Activated CD4-positive, alpha-beta T cell treated with anti-CD3 and anti-CD28 coated beads for 36 hours (primary cell): ENCODE measurements at regions of chr2 and their contacts with region 1.

Region 1: GRCh38 chr2:169664978-169665930 is 29.0 kb downstream of the CFAP210 start:
- DNase-seq: no peak
- ATAC-seq: no peak
- H3K4me3 Mint-ChIP-seq: no peak overlapping the region
- H3K27ac Mint-ChIP-seq: no peak overlapping the region
- H3K4me1 Mint-ChIP-seq: no peaks in the 10 kb centered on the region
- H3K27me3 Mint-ChIP-seq: no peaks in the 10 kb centered on the region

Region 2: GRCh38 chr2:169649278-169649677 is 16.0 kb before region 1 on chr2:
- CTCF ChIA-PET with region 1: no interaction called
- POLR2A ChIA-PET with region 1: no interaction called
- intact Hi-C with region 1: loop called in 1 of 2 experiments (anchors 1 kb)
- DNase-seq: no peak
- ATAC-seq: no peak
- H3K4me3 Mint-ChIP-seq: no peak overlapping the region
- H3K27ac Mint-ChIP-seq: no peak overlapping the region
- H3K4me1 Mint-ChIP-seq: no peaks in the 10 kb centered on the region
- H3K27me3 Mint-ChIP-seq: peaks cover 15% of the 10 kb centered on the region

Region 3: GRCh38 chr2:169716238-169716886 is 51.1 kb after region 1 on chr2:
- CTCF ChIA-PET with region 1: no interaction called
- POLR2A ChIA-PET with region 1: no interaction called
- intact Hi-C with region 1: no loop called
- DNase-seq: no peak
- ATAC-seq: no peak
- H3K4me3 Mint-ChIP-seq: no peak overlapping the region
- H3K27ac Mint-ChIP-seq: no peak overlapping the region
- H3K4me1 Mint-ChIP-seq: no peaks in the 10 kb centered on the region
- H3K27me3 Mint-ChIP-seq: no peaks in the 10 kb centered on the region

Region 4: GRCh38 chr2:170425281-170425751 is 760.1 kb after region 1 on chr2:
- CTCF ChIA-PET with region 1: no interaction called
- POLR2A ChIA-PET with region 1: no interaction called
- intact Hi-C with region 1: no loop called
- DNase-seq: no peak
- ATAC-seq: no peak
- H3K4me3 Mint-ChIP-seq: no peak overlapping the region
- H3K27ac Mint-ChIP-seq: no peak overlapping the region
- H3K4me1 Mint-ChIP-seq: no peaks in the 10 kb centered on the region
- H3K27me3 Mint-ChIP-seq: peaks cover 6% of the 10 kb centered on the region

Region 5: DNA sequence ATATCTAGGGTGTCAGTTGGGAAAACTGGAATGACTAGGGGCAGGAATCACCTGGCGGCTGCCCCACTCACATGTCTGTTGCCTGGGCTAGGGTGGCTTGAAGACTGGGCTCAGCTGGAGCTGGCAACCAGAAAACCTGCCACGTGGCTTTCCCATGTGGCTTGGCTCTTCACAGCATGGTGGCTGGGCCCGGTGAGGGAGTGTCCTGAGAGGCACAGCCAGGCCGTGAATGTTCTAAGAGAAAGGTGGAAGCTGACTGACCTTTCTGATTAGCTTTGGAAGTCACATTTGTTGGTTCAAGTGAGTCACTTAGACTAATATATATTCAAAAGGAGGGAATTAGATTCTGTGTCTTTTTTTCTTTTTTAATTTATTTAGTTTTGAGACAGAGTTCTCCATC is 1072.6 kb after region 1 on chr2:
- CTCF ChIA-PET with region 1: no interaction called
- POLR2A ChIA-PET with region 1: interaction called, 13 read pairs
- intact Hi-C with region 1: no loop called
- DNase-seq: no peak
- ATAC-seq: no peak
- H3K4me3 Mint-ChIP-seq: no peak overlapping the region
- H3K27ac Mint-ChIP-seq: no peak overlapping the region
- H3K4me1 Mint-ChIP-seq: no peaks in the 10 kb centered on the region
- H3K27me3 Mint-ChIP-seq: peaks cover 4% of the 10 kb centered on the region